GM12878 (cell line): ENCODE measurements at regions of chr6 and their contacts with region 1.

Region 1: GRCh38 chr6:149028767-149029405 is 282.1 kb downstream of the UST start:
- DNase-seq: peak; percentile 72
- ATAC-seq: no peak
- H3K4me3 ChIP-seq: no peak overlapping the region
- H3K27ac ChIP-seq: no peak overlapping the region
- H3K4me1 ChIP-seq: peaks cover 8% of the 10 kb centered on the region
- H3K27me3 ChIP-seq: no peaks in the 10 kb centered on the region
- CTCF ChIP-seq: peak; percentile 40 to 79 (median 53); a peak in 5 of 6 replicates
- EP300 ChIP-seq: no peak
- POLR2A ChIP-seq: no peak
- RAD21 ChIP-seq: peak; percentile 91

Region 2: DNA sequence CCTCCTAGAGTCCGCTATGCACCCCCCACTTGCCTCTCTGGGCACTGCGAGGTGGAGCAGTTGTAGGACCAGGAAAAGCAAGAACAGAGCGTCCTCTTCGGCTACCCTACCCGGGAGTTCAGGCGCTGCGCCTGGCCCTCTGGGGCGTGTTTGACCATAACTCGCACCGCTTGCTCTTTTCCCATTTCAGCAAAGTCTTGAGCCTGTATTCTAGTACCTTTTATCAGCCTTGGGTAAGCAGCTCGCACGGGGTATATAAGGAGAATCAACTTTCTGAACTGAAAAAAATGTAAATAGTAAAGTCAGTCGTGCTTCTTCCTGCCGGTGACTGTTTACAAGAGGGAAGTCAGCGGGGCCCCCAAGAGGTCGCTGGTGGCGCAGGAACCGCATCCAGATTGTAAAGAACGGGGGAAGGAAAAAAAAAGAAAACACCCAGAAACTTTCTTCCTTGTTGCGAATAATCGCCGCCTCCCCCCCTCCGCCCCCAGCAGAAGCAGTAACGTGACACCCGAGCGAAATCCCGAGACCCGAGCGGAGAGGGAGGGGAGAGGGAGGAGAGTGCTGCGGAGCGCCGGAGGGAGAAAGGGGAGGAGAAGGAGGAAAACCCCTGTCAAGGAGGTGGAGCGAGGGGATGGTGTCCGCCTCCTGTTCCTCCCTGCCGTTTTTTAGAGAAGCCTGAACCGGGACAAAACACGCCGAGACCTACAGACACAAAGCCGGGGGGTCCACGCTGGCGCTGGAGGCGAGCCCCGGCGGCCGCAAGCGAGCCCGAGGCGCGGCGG is 282.3 kb before region 1 on chr6 and contains the start of gene UST:
- CTCF ChIA-PET with region 1: no interaction called
- POLR2A ChIA-PET with region 1: no interaction called
- RAD21 ChIA-PET with region 1: interaction called, 3 read pairs
- SMC1A ChIA-PET with region 1: interaction called, 3 read pairs
- in situ Hi-C with region 1: no loop called
- intact Hi-C with region 1: loop called (anchors 2 kb)
- DNase-seq: no peak
- ATAC-seq: peak; percentile 47
- H3K4me3 ChIP-seq: peak within 1 kb of the TSS; percentile 64
- H3K27ac ChIP-seq: no peak within 1 kb of the TSS
- H3K4me1 ChIP-seq: no peaks in the 10 kb centered on the region
- H3K27me3 ChIP-seq: peaks cover 1 to 17% of the 10 kb centered on the region in 2 experiments; a peak in 3 of 4 replicates
- CTCF ChIP-seq: peak; percentile 47 to 70 (median 57)
- EP300 ChIP-seq: no peak
- POLR2A ChIP-seq: no peak
- RAD21 ChIP-seq: peak; percentile 85
- polyA plus RNA-seq, gene UST: 3.6 to 3.7 TPM

Region 3: GRCh38 chr6:149060300-149060997 is 31.6 kb after region 1 on chr6:
- CTCF ChIA-PET with region 1: interaction called, 156 read pairs
- POLR2A ChIA-PET with region 1: interaction called, 222 read pairs
- RAD21 ChIA-PET with region 1: interaction called, 521 read pairs
- SMC1A ChIA-PET with region 1: interaction called, 1,060 read pairs
- in situ Hi-C with region 1: no loop called
- intact Hi-C with region 1: loop called (anchors 1 kb)
- DNase-seq: peak; percentile 90
- ATAC-seq: peak; percentile 78
- H3K4me3 ChIP-seq: peak overlapping the region; percentile 11; the same call in 1 of the 2 replicates
- H3K27ac ChIP-seq: peak overlapping the region; percentile 29
- H3K4me1 ChIP-seq: peaks cover 40% of the 10 kb centered on the region
- H3K27me3 ChIP-seq: no peaks in the 10 kb centered on the region
- CTCF ChIP-seq: no peak
- EP300 ChIP-seq: peak; percentile 47 to 66; a peak in 2 of 4 replicates
- POLR2A ChIP-seq: no peak
- RAD21 ChIP-seq: no peak

Region 4: DNA sequence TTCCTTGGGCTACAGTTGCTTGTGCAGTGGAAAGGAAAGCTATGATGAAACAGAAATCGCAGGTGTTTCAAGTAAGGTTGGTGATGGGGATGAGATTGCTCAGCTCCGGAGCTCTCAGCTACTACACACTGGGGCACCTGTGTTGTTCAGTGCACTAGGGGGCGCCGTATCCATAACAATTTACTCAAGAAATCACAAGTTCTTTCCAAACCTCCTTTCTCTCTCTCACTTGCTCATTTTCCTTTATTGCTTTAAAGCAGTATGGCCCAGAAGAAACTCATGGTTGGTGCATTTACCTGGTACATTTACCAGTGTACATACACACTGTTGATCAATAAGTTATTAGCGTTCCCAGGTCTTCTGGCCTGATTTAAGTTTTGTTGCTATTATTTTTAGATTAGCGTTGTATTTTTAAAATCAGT is 53.4 kb after region 1 on chr6:
- CTCF ChIA-PET with region 1: interaction called, 32 read pairs
- POLR2A ChIA-PET with region 1: interaction called, 9 read pairs
- RAD21 ChIA-PET with region 1: interaction called, 106 read pairs
- SMC1A ChIA-PET with region 1: interaction called, 53 read pairs
- in situ Hi-C with region 1: no loop called
- intact Hi-C with region 1: loop called (anchors 1 kb)
- DNase-seq: no peak
- ATAC-seq: peak; percentile 91
- H3K4me3 ChIP-seq: no peak overlapping the region
- H3K27ac ChIP-seq: no peak overlapping the region
- H3K4me1 ChIP-seq: peaks cover 33% of the 10 kb centered on the region
- H3K27me3 ChIP-seq: no peaks in the 10 kb centered on the region
- CTCF ChIP-seq: peak; percentile 77 to 88 (median 79)
- EP300 ChIP-seq: no peak
- POLR2A ChIP-seq: no peak
- RAD21 ChIP-seq: peak; percentile 94

Region 5: GRCh38 chr6:149190224-149190831 is 161.4 kb after region 1 on chr6:
- CTCF ChIA-PET with region 1: interaction called, 9 read pairs
- POLR2A ChIA-PET with region 1: no interaction called
- RAD21 ChIA-PET with region 1: interaction called, 7 read pairs
- SMC1A ChIA-PET with region 1: interaction called, 6 read pairs
- in situ Hi-C with region 1: no loop called
- intact Hi-C with region 1: loop called (anchors 2 kb)
- DNase-seq: no peak
- ATAC-seq: peak; percentile 95
- H3K4me3 ChIP-seq: no peak overlapping the region
- H3K27ac ChIP-seq: no peak overlapping the region
- H3K4me1 ChIP-seq: peaks cover 5% of the 10 kb centered on the region
- H3K27me3 ChIP-seq: no peaks in the 10 kb centered on the region
- CTCF ChIP-seq: peak; percentile 39 to 57 (median 51)
- EP300 ChIP-seq: no peak
- POLR2A ChIP-seq: no peak
- RAD21 ChIP-seq: peak; percentile 61

Region 6: GRCh38 chr6:149335924-149336608 is 307.2 kb after region 1 on chr6:
- CTCF ChIA-PET with region 1: interaction called, 3 read pairs
- POLR2A ChIA-PET with region 1: interaction called, 3 read pairs
- RAD21 ChIA-PET with region 1: interaction called, 3 read pairs
- SMC1A ChIA-PET with region 1: interaction called, 3 read pairs
- in situ Hi-C with region 1: loop called (anchors 5 kb)
- intact Hi-C with region 1: no loop called
- DNase-seq: no peak
- ATAC-seq: peak; percentile 50
- H3K4me3 ChIP-seq: peak overlapping the region; percentile 32; the same call in 1 of the 2 replicates
- H3K27ac ChIP-seq: peak overlapping the region; percentile 73
- H3K4me1 ChIP-seq: peaks cover 36% of the 10 kb centered on the region
- H3K27me3 ChIP-seq: no peaks in the 10 kb centered on the region
- CTCF ChIP-seq: no peak
- EP300 ChIP-seq: no peak
- POLR2A ChIP-seq: no peak
- RAD21 ChIP-seq: no peak